Activated CD8-positive, alpha-beta T cell treated with anti-CD3 and anti-CD28 coated beads, Interleukin-2, amount 10 ng/mL, durations not matched to agents 7 days and 5 days (primary cell): ENCODE measurements at regions of chr17 and their contacts with region 1.

Region 1: GRCh38 chr17:38729886-38730525 is at the start of gene CISD3:
- DNase-seq: peak; percentile 88
- ATAC-seq: peak; percentile 87
- H3K4me3 Mint-ChIP-seq: peak within 1 kb of the TSS; percentile 90
- H3K27ac Mint-ChIP-seq: peak within 1 kb of the TSS; percentile 95
- H3K4me1 Mint-ChIP-seq: peaks cover 74% of the 10 kb centered on the region
- H3K27me3 Mint-ChIP-seq: no peaks in the 10 kb centered on the region
- total RNA-seq, gene CISD3: 48.2 to 56.1 TPM

Region 2: DNA sequence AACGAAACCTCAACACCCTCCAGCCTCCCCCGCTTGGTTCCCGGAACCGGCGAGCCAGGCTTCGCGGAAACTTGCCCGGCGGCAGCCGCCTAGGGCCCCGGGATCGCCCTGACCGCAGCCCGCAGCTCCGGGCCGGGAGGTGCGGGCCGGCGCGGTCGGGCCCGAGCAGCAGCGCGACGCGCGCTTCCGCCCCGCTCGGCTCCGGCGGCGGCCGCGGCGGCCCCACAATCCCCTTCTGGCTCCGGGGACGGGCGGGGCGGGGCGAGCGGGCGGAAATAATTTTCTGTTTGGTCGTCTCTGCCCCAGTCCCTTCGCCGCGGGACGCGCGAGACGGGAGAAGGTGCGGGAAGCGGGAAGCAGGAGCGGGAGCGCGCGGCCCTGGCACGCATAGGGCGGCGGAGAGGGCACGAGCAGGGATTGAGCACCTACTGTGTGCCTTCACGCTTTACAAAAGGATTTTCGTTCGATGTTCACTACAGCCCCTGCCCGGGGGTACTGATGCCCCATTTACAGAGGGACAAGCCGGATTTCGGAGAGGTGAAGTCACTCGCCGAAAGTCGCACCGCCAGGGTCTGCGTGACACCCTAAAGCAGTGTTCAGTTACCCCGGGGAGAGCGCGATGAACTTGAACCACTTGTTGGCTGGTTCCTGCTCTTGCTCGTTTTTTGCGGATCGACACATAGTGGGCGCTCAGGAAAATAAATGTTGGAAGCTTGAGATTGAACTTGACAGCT is 27.7 kb before region 1 on chr17:
- CTCF ChIA-PET with region 1: interaction called, 27 read pairs
- POLR2A ChIA-PET with region 1: interaction called, 92 read pairs
- DNase-seq: peak; percentile 85
- ATAC-seq: peak; percentile 47
- H3K4me3 Mint-ChIP-seq: peak overlapping the region; percentile 87
- H3K27ac Mint-ChIP-seq: peak overlapping the region; percentile 97
- H3K4me1 Mint-ChIP-seq: peaks cover 52% of the 10 kb centered on the region
- H3K27me3 Mint-ChIP-seq: no peaks in the 10 kb centered on the region

Region 3: GRCh38 chr17:38709864-38710603 is 20.0 kb before region 1 on chr17:
- CTCF ChIA-PET with region 1: interaction called, 27 read pairs
- POLR2A ChIA-PET with region 1: interaction called, 92 read pairs
- DNase-seq: no peak
- ATAC-seq: no peak
- H3K4me3 Mint-ChIP-seq: no peak overlapping the region
- H3K27ac Mint-ChIP-seq: peak overlapping the region; percentile 56
- H3K4me1 Mint-ChIP-seq: peaks cover 61% of the 10 kb centered on the region
- H3K27me3 Mint-ChIP-seq: no peaks in the 10 kb centered on the region

Region 4: GRCh38 chr17:38777641-38778250 is 47.7 kb after region 1 on chr17:
- CTCF ChIA-PET with region 1: no interaction called
- POLR2A ChIA-PET with region 1: no interaction called
- DNase-seq: no peak
- ATAC-seq: no peak
- H3K4me3 Mint-ChIP-seq: no peak overlapping the region
- H3K27ac Mint-ChIP-seq: no peak overlapping the region
- H3K4me1 Mint-ChIP-seq: peaks cover 8% of the 10 kb centered on the region
- H3K27me3 Mint-ChIP-seq: no peaks in the 10 kb centered on the region

Region 5: DNA sequence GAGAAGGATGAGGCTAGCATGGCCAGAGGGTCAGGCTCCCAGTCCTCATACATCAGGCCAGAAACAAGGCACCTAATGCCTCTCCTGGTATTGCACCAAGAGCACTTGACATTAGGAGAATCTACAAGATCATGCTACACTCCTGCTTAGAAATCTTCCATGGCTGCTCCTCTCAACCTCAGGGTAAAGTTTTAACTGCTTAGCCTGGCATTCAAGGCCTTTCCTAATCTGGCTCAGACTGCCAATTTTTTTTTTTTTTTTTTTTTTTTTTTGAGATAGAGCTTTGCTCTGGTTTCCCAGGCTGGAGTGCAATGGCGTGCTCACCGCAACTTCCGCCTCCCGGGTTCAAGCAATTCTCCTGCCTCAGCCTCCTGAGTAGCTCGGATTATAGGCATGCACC is 61.2 kb after region 1 on chr17:
- CTCF ChIA-PET with region 1: no interaction called
- POLR2A ChIA-PET with region 1: no interaction called
- DNase-seq: no peak
- ATAC-seq: no peak
- H3K4me3 Mint-ChIP-seq: no peak overlapping the region
- H3K27ac Mint-ChIP-seq: no peak overlapping the region
- H3K4me1 Mint-ChIP-seq: peaks cover 6% of the 10 kb centered on the region
- H3K27me3 Mint-ChIP-seq: no peaks in the 10 kb centered on the region